MCF 10A (cell line): ENCODE measurements at regions of chr2 and their contacts with region 1.

Region 1: DNA sequence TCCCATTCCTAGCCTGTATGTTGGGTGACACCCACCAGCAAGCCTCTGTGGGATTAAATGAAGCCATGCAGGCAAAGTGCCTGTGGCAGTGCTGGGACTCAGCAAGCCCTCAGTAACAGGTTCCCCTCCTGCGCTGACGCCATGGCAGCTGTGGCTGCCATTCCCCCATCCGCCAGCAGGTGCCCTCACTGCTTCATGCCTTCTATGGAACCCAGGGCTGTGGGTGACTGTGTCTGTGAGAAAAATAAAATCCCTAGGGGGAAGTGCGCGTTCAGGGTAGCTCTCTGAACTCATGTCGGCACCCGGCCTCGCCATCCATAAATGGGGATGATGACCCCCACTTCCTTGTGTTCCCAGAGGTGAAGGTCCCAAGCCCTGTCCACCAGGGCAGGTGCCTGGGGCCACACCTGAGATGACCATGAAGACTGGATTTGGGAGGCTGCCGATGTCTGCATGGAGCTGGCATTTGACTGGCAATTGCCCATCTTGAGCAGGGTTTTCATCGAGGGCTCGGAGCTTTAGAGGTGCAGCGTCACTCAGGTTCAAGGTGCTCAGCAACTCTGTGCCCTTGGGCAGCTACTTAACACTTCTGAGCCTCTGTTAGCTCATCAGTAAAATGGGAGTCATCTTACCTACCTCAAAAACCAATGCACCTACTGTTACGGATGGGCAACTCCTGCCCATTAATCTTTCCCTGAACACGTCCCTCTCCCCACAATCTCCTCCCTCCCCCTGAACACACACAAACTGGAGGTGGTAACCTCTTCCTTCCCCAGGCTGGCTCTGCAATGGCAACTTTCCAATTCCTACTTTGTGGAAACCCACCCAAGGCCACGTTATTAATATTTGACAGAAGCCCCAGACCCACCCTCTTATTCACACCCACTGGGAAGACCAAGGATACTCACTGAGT is 2.9 kb upstream of the MAL start:
- DNase-seq: peak; percentile 62
- H3K4me3 Mint-ChIP-seq: no peak overlapping the region
- H3K27ac Mint-ChIP-seq: no peak overlapping the region
- H3K4me1 Mint-ChIP-seq: peaks cover under 1% of the 10 kb centered on the region
- H3K27me3 Mint-ChIP-seq: peaks cover 48% of the 10 kb centered on the region
- CTCF ChIP-seq: peak; percentile 95

Region 2: DNA sequence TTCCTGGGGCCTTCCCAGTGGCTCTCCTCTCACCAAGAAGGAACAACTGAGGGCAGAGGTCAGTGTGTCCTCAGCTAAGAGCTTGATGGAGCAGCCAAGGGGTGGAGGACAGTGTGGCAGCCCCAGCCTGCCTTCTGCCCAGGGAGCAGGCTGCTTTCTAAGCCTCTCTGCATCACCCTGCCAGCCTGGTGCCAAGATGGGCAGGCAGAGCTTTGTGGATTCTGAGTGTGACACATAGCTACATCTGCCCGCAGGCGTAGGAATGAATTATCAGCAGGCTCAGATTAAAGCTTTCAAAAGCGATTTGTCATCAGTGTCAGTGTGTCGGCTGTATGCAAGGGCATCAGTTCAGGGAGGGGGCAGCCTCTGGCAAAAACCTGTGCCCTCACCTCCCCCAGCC is 11.7 kb after region 1 on chr2:
- CTCF ChIA-PET with region 1: interaction called, 27 read pairs
- POLR2A ChIA-PET with region 1: no interaction called
- intact Hi-C with region 1: no loop called
- DNase-seq: peak; percentile 64
- H3K4me3 Mint-ChIP-seq: no peak overlapping the region
- H3K27ac Mint-ChIP-seq: no peak overlapping the region
- H3K4me1 Mint-ChIP-seq: no peaks in the 10 kb centered on the region
- H3K27me3 Mint-ChIP-seq: peaks cover 12% of the 10 kb centered on the region
- CTCF ChIP-seq: no peak

Region 3: DNA sequence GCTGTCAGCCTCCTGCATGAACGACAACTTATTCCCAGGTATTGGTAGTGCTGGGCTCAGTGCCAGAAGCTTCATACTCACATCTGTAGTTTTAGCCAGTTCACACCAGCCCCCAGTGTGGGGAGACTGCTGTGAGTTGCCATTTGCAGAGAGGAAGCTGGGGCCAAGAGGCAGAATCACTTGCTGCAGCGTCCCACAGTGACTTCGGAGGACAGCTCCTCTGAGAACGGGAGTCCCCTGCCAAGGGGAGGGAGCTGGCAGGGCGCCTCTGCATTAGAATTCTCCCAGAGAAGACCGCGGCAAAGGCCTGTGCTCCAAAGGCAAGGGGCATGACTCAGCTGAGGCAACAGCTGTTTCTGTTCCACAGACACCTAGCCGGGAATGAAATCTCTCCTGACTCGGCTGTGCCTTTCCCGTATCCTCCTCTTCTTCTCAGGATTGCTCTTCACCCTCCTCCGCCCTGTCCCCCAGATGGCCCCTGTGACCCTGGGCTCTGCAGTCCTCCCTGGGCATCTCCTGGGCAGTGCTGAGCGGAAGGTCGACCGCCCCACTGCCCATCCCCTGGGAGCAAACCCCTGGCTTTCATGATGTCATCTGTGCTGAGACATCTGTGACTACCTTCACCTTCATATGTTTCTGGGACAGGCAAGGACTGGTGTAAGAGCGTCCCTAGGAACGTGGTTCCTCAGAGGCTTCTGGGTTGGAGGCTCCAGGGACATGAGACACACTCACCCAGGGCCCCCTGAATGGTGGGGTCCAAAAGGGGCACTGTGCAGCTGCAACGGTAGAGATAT is 20.9 kb after region 1 on chr2:
- CTCF ChIA-PET with region 1: interaction called, 14 read pairs
- POLR2A ChIA-PET with region 1: no interaction called
- intact Hi-C with region 1: no loop called
- DNase-seq: peak; percentile 75
- H3K4me3 Mint-ChIP-seq: no peak overlapping the region
- H3K27ac Mint-ChIP-seq: no peak overlapping the region
- H3K4me1 Mint-ChIP-seq: peaks cover 11% of the 10 kb centered on the region
- H3K27me3 Mint-ChIP-seq: peaks cover 26% of the 10 kb centered on the region
- CTCF ChIP-seq: no peak

Region 4: DNA sequence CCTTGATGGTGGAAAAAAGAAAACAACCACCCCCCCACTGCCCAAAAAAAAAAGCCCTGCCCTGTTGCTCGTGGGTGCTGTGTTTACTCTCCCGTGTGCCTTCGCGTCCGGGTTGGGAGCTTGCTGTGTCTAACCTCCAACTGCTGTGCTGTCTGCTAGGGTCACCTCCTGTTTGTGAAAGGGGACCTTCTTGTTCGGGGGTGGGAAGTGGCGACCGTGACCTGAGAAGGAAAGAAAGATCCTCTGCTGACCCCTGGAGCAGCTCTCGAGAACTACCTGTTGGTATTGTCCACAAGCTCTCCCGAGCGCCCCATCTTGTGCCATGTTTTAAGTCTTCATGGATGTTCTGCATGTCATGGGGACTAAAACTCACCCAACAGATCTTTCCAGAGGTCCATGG is 31.0 kb after region 1 on chr2:
- CTCF ChIA-PET with region 1: interaction called, 18 read pairs
- POLR2A ChIA-PET with region 1: no interaction called
- intact Hi-C with region 1: no loop called
- DNase-seq: peak; percentile 10
- H3K4me3 Mint-ChIP-seq: no peak overlapping the region
- H3K27ac Mint-ChIP-seq: no peak overlapping the region
- H3K4me1 Mint-ChIP-seq: no peaks in the 10 kb centered on the region
- H3K27me3 Mint-ChIP-seq: peaks cover 50% of the 10 kb centered on the region
- CTCF ChIP-seq: no peak

Region 5: DNA sequence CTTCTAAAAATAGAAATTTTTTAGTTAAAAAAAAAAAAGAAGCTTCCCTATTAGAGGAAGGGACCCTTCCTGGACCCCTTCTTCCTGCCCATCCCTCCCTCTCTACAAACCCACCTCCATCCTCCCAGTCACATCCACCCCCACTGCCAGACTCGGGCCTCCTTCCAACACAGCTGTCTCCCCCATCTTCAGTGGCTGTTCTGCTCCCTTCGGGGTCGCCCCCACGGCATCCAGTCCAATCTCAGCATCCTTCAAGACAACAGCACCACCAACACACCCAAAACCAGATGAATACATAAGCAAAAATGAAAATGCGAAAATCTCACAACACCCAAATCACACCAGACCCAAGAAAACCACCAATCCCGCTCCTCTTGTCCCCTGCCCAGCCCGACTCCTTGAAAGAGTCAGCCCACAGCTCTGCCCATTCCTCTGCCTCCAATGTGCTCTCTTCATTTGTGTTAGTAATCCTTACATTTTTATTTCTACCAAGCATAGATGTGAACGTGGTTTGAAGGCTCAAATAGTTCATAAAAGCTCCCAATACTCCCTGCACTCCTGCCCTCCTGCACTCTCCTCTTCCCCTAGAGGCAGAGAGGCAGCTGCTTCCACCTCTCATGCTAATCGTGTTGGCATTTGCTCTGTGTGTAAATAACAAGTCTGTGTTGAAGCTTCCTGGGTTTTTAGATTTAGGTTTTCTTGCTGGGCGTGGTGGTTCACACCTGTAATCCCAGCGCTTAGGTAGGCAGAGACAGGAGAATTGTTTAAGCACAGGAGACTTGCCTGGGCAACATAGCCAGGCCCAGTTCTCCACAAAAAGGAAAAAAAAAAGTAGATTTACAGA is 39.9 kb after region 1 on chr2:
- CTCF ChIA-PET with region 1: interaction called, 11 read pairs
- POLR2A ChIA-PET with region 1: no interaction called
- intact Hi-C with region 1: no loop called
- DNase-seq: no peak
- H3K4me3 Mint-ChIP-seq: no peak overlapping the region
- H3K27ac Mint-ChIP-seq: no peak overlapping the region
- H3K4me1 Mint-ChIP-seq: no peaks in the 10 kb centered on the region
- H3K27me3 Mint-ChIP-seq: peaks cover 50% of the 10 kb centered on the region
- CTCF ChIP-seq: no peak

Region 6: GRCh38 chr2:95076784-95077529 is 54.4 kb after region 1 on chr2:
- CTCF ChIA-PET with region 1: interaction called, 86 read pairs
- POLR2A ChIA-PET with region 1: interaction called, 4 read pairs
- intact Hi-C with region 1: loop called (anchors 1 kb)
- DNase-seq: peak; percentile 75
- H3K4me3 Mint-ChIP-seq: peak overlapping the region; percentile 53
- H3K27ac Mint-ChIP-seq: no peak overlapping the region
- H3K4me1 Mint-ChIP-seq: no peaks in the 10 kb centered on the region
- H3K27me3 Mint-ChIP-seq: peaks cover 22% of the 10 kb centered on the region
- CTCF ChIP-seq: peak; percentile 71

Region 7: DNA sequence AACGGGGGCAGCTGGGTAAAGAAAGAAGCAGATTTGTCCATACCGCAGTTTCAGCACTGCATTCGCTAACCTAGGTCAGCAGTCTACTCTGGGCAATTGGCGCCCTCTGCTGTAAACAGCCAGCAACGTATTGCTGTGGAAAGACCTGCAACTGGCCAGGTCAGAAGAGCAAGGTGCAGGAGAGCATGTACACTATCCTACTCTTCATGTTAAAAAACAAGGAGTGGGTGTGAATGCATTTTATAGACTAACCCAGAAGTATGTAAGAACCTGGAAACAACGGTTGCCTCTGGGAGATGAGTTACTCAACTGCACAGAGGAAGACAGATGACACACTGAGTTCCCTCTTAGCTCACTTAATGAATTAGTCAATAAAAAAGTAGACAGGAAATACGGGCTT is 92.9 kb after region 1 on chr2:
- CTCF ChIA-PET with region 1: interaction called, 42 read pairs
- POLR2A ChIA-PET with region 1: interaction called, 4 read pairs
- intact Hi-C with region 1: loop called (anchors 1 kb)
- DNase-seq: peak; percentile 65
- H3K4me3 Mint-ChIP-seq: no peak overlapping the region
- H3K27ac Mint-ChIP-seq: no peak overlapping the region
- H3K4me1 Mint-ChIP-seq: peaks cover 20% of the 10 kb centered on the region
- H3K27me3 Mint-ChIP-seq: no peaks in the 10 kb centered on the region
- CTCF ChIP-seq: peak; percentile 78